PC-3 (cell line): ENCODE measurements at regions of chr3 and their contacts with region 1.

Region 1: GRCh38 chr3:32143849-32144757 is 37.7 kb downstream of the GPD1L start:
- DNase-seq: peak; percentile 99
- ATAC-seq: peak; percentile 82
- H3K4me3 ChIP-seq: no peak overlapping the region
- H3K27ac ChIP-seq: 0 out of 2 replicates have a peak overlapping the region, but pooled peaks have one; percentile 16
- H3K4me1 ChIP-seq: peaks cover 42% of the 10 kb centered on the region
- H3K27me3 ChIP-seq: no peaks in the 10 kb centered on the region
- CTCF ChIP-seq: peak; percentile 93

Region 2: GRCh38 chr3:30292192-30292893 is 1851.8 kb before region 1 on chr3:
- CTCF ChIA-PET with region 1: no interaction called
- POLR2A ChIA-PET with region 1: interaction called, 15 read pairs
- intact Hi-C with region 1: no loop called
- DNase-seq: peak; percentile 86
- ATAC-seq: peak; percentile 88
- H3K4me3 ChIP-seq: 0 out of 2 replicates have a peak overlapping the region, but pooled peaks have one; percentile 9
- H3K27ac ChIP-seq: peak overlapping the region; percentile 86
- H3K4me1 ChIP-seq: peaks cover 34% of the 10 kb centered on the region
- H3K27me3 ChIP-seq: no peaks in the 10 kb centered on the region
- CTCF ChIP-seq: no peak

Region 3: DNA sequence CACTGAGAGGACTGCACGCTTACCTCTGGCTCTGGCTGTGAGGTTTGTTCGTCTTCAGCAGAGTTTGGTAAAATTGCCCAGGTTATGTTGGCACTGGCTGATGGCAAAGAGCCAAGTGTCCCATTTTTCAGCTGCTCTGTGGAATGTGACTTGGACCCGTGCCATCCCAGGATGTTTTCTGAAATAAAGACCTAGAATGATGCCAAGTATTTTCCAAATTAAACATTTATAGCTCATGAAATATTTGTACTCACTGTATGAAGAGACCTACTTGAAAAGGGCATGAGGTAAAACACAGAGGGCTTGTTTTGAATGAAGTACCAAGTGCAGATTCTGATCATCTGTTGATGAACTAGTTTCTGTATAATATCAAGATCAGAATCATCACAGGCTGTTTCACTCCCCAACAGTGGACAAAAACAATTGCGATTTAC is 410.9 kb before region 1 on chr3:
- CTCF ChIA-PET with region 1: no interaction called
- POLR2A ChIA-PET with region 1: no interaction called
- intact Hi-C with region 1: loop called (anchors 10 kb)
- DNase-seq: peak; percentile 58
- ATAC-seq: peak; percentile 37
- H3K4me3 ChIP-seq: no peak overlapping the region
- H3K27ac ChIP-seq: no peak overlapping the region
- H3K4me1 ChIP-seq: peaks cover 10% of the 10 kb centered on the region; the same call in 1 of the 2 replicates
- H3K27me3 ChIP-seq: no peaks in the 10 kb centered on the region
- CTCF ChIP-seq: no peak

Region 4: DNA sequence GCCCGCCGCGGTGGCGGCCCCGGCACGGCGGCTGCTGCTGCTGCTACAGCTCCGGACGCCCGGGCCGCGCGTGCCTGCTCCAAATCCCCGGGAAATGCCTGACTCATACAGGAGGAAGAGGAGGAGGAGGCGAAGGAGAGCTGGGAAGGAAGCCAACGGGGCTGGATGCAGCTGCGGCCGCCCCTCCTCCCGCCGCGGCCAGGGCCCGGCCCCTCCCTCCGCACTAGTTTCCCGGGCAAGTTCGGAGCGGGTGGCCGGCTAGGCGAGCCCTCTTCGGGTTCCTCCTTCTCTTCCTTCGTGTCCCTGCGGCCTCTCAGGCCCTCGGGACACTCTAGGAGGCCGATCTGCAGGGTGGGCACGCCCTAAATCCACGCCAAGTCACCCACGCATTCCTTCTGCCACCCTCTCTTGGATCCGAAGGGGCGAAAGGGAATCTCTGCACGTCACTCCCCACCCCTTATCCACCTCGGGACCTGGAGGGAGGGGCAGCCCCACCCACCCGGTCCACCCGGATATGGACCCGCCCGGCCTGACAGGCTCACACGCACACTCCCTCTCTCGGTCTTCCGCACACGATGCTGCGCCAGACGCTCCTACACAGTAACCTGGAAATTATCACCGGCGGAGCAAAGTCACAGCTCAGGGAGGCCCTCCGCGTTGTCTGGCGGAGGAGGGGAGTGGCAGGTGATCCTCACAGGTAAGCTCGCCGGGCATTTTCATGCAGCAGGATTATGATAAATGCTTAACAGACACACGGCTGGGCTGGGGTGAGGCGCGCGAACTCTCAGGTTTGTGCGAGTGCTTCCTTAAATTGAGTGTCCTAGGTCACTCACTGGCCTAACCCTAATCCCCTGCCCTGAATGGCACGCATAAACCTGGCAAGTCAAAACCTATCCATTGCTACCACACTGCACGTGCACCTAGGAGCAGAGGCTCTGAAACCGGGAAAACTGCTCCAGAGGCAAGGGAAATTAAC is 162.6 kb before region 1 on chr3 and contains the starts of genes OSBPL10 and ZNF860:
- CTCF ChIA-PET with region 1: interaction called, 3 read pairs
- POLR2A ChIA-PET with region 1: no interaction called
- intact Hi-C with region 1: loop called (anchors 2 kb)
- DNase-seq: peak; percentile 96
- ATAC-seq: peak; percentile 66
- H3K4me3 ChIP-seq: peak within 1 kb of the TSS; percentile 89
- H3K27ac ChIP-seq: peak within 1 kb of the TSS; percentile 87
- H3K4me1 ChIP-seq: peaks cover 56% of the 10 kb centered on the region
- H3K27me3 ChIP-seq: no peaks in the 10 kb centered on the region
- CTCF ChIP-seq: no peak
- total RNA-seq, gene OSBPL10: 34.6 and 48.0 TPM in 2 replicates
- total RNA-seq, gene ZNF860: 7.9 and 10.5 TPM in 2 replicates

Region 5: DNA sequence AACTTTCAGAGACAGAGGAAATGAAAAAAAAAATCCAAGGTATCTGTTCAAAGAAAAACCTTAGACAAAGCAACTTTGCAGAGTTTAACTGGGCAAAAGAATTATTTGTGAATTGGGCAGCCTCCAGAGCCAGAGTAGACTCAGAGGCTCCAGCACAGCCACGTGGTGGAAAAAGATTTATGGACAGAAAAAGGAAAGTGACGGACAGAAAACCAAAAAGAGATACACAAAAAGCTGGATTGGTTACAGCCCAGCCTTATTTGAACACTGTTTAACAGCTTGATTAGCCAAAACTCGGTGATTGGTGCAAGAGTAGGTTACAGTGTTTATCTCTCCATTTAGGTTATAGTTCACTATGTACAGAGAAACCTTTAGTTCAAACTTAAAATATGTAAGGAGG is 61.4 kb before region 1 on chr3:
- CTCF ChIA-PET with region 1: no interaction called
- POLR2A ChIA-PET with region 1: no interaction called
- intact Hi-C with region 1: loop called (anchors 2 kb)
- DNase-seq: peak; percentile 14
- ATAC-seq: peak; percentile 83
- H3K4me3 ChIP-seq: no peak overlapping the region
- H3K27ac ChIP-seq: no peak overlapping the region
- H3K4me1 ChIP-seq: peaks cover 9% of the 10 kb centered on the region
- H3K27me3 ChIP-seq: no peaks in the 10 kb centered on the region
- CTCF ChIP-seq: no peak